ENCODE measurements at regions of chr20 and their contacts with region 1.

Region 1: GRCh38 chr20:47785854-47786764 is 828 bp upstream of the SULF2 start:
- DNase-seq: peak; percentile 63 to 81
- ATAC-seq: peak; percentile 82 to 94 (median 90)
- H3K4me3 ChIP-seq: peak overlapping the region; percentile 26 to 75 (median 60)
- H3K27ac ChIP-seq: peak overlapping the region; percentile 62 to 87 (median 85)
- H3K4me1 ChIP-seq: peaks cover 0 to 51% (median 21%) of the 10 kb centered on the region in 9 donors
- H3K27me3 ChIP-seq: peaks cover 0 to 70% (median 10%) of the 10 kb centered on the region in 7 donors
- CTCF ChIP-seq: peak; percentile 51 to 88 (median 75)

Region 2: GRCh38 chr20:47677635-47678453 is 108.3 kb before region 1 on chr20:
- intact Hi-C with region 1: loop called in 8 of 10 experiments (anchors 5 to 10 kb)
- DNase-seq: peak; percentile 28 to 52
- ATAC-seq: peak in 3 of 8 donors; percentile 30 to 53 (median 40)
- H3K4me3 ChIP-seq: no peak overlapping the region
- H3K27ac ChIP-seq: no peak overlapping the region
- H3K4me1 ChIP-seq: peaks cover 9 to 32% (median 17%) of the 10 kb centered on the region in 9 donors
- H3K27me3 ChIP-seq: no peaks in the 10 kb centered on the region
- CTCF ChIP-seq: peak; percentile 42 to 80 (median 78)

Region 3: GRCh38 chr20:47886460-47887041 is 100.4 kb after region 1 on chr20:
- intact Hi-C with region 1: no loop called
- DNase-seq: no peak
- ATAC-seq: no peak
- H3K4me3 ChIP-seq: no peak overlapping the region
- H3K27ac ChIP-seq: no peak overlapping the region
- H3K4me1 ChIP-seq: no peaks in the 10 kb centered on the region
- H3K27me3 ChIP-seq: peaks cover 0 to 27% (median 12%) of the 10 kb centered on the region in 7 donors
- CTCF ChIP-seq: no peak

Region 4: DNA sequence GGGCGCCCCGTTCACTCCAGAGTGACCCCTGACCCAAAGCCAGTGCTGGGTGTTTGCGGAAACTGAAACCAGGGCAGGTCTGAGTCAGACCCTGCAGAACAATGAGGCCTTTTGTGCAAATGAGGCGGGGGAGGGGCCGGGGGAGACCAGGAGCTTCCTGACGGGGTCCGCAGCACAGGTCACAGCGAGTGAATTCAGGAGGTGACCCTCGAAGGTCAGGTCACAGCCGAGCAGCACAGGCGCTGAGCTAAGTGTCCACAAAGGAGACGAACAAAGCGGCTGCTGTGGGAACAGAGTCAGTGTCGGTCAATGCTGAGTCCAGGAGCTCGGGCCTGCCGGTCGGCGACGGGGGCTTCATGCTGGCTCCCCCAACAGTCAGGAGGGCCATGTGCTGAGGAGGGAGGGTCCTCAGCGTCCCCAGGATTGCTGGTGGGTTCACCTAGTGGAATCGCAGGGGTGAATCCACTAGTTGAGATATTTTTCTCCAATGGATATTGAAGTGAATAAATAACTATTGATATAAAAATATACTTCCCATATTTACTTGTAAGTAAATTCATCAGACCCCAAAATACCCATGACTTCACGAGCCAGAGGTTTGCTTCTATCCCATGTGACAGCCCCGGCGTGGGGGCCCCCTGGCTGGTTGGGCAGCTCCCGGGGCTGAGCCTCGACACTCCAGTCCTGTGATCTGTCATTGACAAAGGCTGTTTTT is 187.6 kb after region 1 on chr20:
- intact Hi-C with region 1: loop called in 1 of 10 experiments (anchors 10 kb)
- DNase-seq: peak; percentile 49 to 70
- ATAC-seq: peak; percentile 52 to 90 (median 80)
- H3K4me3 ChIP-seq: no peak overlapping the region
- H3K27ac ChIP-seq: peak overlapping the region in 8 of 10 donors; percentile 36 to 87 (median 70)
- H3K4me1 ChIP-seq: peaks cover 0 to 35% (median 18%) of the 10 kb centered on the region in 9 donors
- H3K27me3 ChIP-seq: peaks cover 0 to 21% (median 8%) of the 10 kb centered on the region in 7 donors
- CTCF ChIP-seq: no peak

Region 5: DNA sequence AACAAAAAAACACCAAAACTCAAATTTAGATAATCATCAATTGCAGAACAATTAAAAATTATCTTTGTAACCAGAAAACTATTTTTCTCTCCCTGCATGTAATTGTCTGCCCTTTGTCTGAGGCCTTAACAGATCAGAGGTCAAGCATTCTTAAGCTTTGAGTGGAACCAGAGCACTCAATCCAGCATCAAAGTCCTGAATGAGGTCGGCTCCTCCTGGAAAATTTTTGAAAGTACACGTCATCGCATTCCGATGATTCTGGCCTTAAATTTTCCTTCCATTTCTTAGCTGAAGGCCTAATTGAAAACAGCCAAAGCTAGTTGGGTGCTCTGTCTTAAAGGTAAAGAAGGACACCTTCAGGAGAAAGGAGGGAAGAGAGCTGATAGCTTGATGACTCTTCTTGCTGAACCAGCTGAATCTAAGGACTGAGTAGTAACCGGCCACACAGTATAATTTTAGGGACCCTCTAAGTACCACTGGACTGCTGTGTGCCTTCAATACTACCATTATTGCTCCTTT is 509.4 kb after region 1 on chr20:
- intact Hi-C with region 1: loop called in 3 of 10 experiments (anchors 10 kb)
- DNase-seq: peak in 1 of 2 donors; percentile 33
- ATAC-seq: peak in 7 of 8 donors; percentile 67 to 85 (median 82)
- H3K4me3 ChIP-seq: no peak overlapping the region
- H3K27ac ChIP-seq: peak overlapping the region in 5 of 10 donors; percentile 22 to 62 (median 41)
- H3K4me1 ChIP-seq: peaks cover 0 to 33% (median 15%) of the 10 kb centered on the region in 9 donors
- H3K27me3 ChIP-seq: no peaks in the 10 kb centered on the region
- CTCF ChIP-seq: peak in 5 of 9 donors; percentile 20 to 55 (median 32)

Measured in heart right ventricle (tissue), 16 donors.